Caco-2 (cell line): ENCODE measurements at regions of chr15 and their contacts with region 1.

Region 1: DNA sequence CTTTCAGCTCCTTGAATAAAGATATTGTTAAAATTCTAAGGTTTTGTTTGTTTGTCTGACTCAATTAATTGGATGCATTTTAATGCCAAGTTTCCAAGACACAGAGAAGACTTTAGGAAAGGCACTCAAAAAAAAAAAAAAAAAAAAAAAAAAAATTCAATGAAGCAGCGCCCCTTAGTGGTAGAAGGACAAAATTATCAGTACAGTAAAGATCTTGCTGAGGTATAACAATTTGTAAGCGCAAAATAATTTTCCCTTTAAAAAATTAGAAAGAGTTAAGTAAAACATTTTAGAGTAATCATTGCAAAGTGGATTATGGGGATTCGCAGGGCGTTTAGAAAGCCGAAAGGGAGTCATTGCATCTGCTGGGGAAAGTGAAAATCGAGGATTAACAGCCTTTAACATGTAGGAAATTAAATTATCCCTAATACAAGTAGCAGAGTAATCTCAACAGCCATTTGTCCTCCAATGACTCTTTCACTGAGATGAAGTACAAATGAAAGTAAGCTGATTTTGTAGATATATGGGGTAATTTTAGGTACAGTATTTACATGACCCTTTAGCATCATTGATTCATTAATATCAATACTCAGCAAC is 5.8 kb upstream of the DIS3L start:
- DNase-seq: peak in 1 of 2 experiments; percentile 7
- H3K4me3 ChIP-seq: no peak overlapping the region
- H3K4me3 Mint-ChIP-seq: no peak overlapping the region
- H3K27ac Mint-ChIP-seq: no peak overlapping the region
- H3K4me1 ChIP-seq: 0 out of 2 replicates have a peak, but pooled peaks cover 11% of the 10 kb centered on the region
- H3K4me1 Mint-ChIP-seq: peaks cover 5% of the 10 kb centered on the region
- H3K27me3 ChIP-seq: no peaks in the 10 kb centered on the region
- H3K27me3 Mint-ChIP-seq: no peaks in the 10 kb centered on the region
- CTCF ChIP-seq: peak in 1 of 2 experiments; percentile 39

Region 2: DNA sequence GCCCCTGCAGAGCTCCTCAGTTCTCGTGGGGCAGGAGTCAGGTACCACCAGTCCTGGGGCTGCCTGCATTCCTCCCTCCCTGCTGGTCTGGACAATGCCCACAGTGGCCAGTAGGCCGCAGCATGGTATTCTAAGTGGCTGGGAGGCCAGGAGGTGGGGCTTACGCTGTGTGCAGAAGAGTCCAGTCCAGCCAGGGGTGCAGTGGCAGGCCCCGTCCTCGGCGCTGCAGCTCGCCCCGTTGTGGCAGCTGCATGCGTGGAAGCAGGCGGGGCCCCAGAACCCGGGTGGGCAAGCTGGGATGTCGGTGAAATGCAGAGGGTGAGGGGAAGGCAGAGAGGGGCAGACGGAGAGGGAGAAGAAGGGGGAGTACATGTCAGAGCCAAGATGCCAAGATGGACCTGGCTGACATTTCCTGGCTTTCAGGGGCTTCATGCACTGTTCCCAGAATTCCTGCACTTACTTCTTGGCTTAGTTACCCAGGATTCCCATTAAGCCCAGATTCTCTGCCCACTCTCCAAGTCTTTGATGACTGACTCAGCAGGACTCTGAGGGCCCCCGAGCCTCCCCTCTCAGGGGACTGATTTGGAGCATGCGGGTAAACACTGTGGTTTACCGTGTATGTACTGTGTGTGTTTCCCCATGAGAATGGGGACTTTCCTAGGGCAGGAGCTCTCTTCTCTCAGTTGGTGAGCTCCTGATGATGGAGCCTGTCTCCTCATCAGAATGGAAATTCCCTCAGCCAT is 370.7 kb before region 1 on chr15:
- CTCF ChIA-PET with region 1: no interaction called
- POLR2A ChIA-PET with region 1: no interaction called
- intact Hi-C with region 1: loop called (anchors 5 kb)
- DNase-seq: peak; percentile 66 to 73
- H3K4me3 ChIP-seq: no peak overlapping the region
- H3K4me3 Mint-ChIP-seq: no peak overlapping the region
- H3K27ac Mint-ChIP-seq: no peak overlapping the region
- H3K4me1 ChIP-seq: no peaks in the 10 kb centered on the region; the same call in 1 of the 2 replicates
- H3K4me1 Mint-ChIP-seq: no peaks in the 10 kb centered on the region
- H3K27me3 ChIP-seq: no peaks in the 10 kb centered on the region
- H3K27me3 Mint-ChIP-seq: no peaks in the 10 kb centered on the region
- CTCF ChIP-seq: peak; percentile 51 to 73

Region 3: DNA sequence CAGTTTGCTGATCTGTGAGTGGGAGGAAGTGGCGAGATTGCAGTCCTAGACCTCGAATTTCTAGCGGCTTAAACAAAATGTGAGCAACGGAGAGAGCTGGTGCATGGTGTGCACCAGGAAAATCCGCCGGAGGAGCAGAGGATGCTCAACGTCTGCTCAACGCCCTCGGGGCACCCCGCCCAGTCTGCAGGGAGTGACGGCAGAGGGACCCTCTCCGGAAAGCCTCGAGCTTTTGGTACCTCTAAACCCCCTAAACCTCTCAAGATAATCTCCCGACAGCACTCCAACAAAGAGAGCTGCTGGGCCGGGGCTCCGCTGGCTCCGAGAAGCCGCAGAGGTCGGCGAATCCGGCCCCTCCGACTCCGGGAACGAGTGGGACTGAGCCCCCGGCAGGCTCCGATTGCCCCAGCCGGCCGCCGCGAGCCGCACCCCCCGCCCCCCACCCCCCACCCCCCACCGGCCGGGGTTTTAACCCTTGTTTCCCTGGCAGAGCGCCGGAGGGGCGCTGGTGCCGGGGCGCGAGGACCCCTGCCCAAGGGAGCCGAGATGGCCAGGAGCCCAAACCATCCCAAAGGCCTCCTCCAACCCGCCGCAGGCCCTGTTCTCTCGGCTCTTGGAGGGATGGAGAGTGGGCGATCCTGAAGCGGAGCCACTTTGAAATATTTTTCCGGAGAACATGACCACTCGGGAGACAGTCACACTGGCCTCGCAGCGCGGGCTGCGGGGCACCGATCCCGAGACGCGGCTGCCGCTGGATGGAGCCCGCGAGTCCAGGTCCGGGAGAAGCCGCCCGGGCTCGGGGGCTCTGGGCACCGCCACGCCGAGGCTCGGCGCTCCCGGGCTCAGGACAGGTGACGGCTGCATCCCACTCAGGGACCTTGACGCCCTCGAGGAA is 35.5 kb before region 1 on chr15:
- CTCF ChIA-PET with region 1: interaction called, 3 read pairs
- POLR2A ChIA-PET with region 1: no interaction called
- intact Hi-C with region 1: loop called (anchors 2 kb)
- DNase-seq: peak; percentile 53 to 75
- H3K4me3 ChIP-seq: peak overlapping the region; percentile 14
- H3K4me3 Mint-ChIP-seq: peak overlapping the region; percentile 66
- H3K27ac Mint-ChIP-seq: no peak overlapping the region
- H3K4me1 ChIP-seq: no peaks in the 10 kb centered on the region
- H3K4me1 Mint-ChIP-seq: peaks cover 9% of the 10 kb centered on the region
- H3K27me3 ChIP-seq: no peaks in the 10 kb centered on the region
- H3K27me3 Mint-ChIP-seq: peaks cover 37% of the 10 kb centered on the region
- CTCF ChIP-seq: peak; percentile 64 to 75